K562 (cell line): ENCODE measurements at regions of chr11 and their contacts with region 1.

Region 1: GRCh38 chr11:68051191-68052144 is 12.6 kb downstream of the TCIRG1 start:
- DNase-seq: no peak
- ATAC-seq: no peak
- H3K4me3 ChIP-seq: no peak overlapping the region
- H3K27ac ChIP-seq: no peak overlapping the region
- H3K4me1 ChIP-seq: peaks cover 0 to 26% of the 10 kb centered on the region in 2 experiments; a peak in 1 of 5 replicates
- H3K27me3 ChIP-seq: no peaks in the 10 kb centered on the region
- CTCF ChIP-seq: no peak
- EP300 ChIP-seq: no peak
- POLR2A ChIP-seq: peak; percentile 32; the same call in 1 of the 2 replicates
- RAD21 ChIP-seq: no peak

Region 2: GRCh38 chr11:68038718-68039525 is 12.5 kb before region 1 on chr11 and contains the start of gene TCIRG1:
- CTCF ChIA-PET with region 1: no interaction called
- POLR2A ChIA-PET with region 1: interaction called, 55 read pairs
- in situ Hi-C with region 1: no loop called
- intact Hi-C with region 1: no loop called
- DNase-seq: peak; percentile 90 to 94 (median 92)
- ATAC-seq: peak; percentile 80
- H3K4me3 ChIP-seq: peak within 1 kb of the TSS; percentile 92
- H3K27ac ChIP-seq: peak within 1 kb of the TSS; percentile 83
- H3K4me1 ChIP-seq: peaks cover 44 to 81% of the 10 kb centered on the region in 2 experiments
- H3K27me3 ChIP-seq: no peaks in the 10 kb centered on the region
- CTCF ChIP-seq: no peak
- EP300 ChIP-seq: no peak
- POLR2A ChIP-seq: peak; percentile 83
- RAD21 ChIP-seq: no peak
- polyA plus RNA-seq, gene TCIRG1: 0.49 to 1.9 TPM

Region 3: DNA sequence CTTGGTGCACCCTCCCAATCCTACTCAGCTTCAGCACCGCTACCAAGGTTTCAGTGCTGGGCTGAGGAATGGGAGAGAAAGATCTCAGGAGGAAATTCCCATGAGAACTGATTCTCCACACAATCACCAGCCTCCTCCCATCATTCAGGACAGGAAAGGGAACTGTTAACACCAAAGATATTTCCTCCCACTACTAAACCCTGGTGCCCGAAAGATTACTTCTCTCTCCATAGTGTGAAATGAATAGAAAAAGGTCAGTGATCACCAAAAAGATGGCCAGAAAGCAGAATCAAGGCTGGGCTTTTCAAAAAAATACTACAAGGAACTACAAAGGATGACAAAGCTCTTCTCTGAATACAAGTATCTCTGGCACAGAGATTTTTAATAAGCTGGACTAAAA is 13.5 kb after region 1 on chr11:
- CTCF ChIA-PET with region 1: no interaction called
- POLR2A ChIA-PET with region 1: interaction called, 16 read pairs
- in situ Hi-C with region 1: no loop called
- intact Hi-C with region 1: no loop called
- DNase-seq: no peak
- ATAC-seq: no peak
- H3K4me3 ChIP-seq: no peak overlapping the region
- H3K27ac ChIP-seq: no peak overlapping the region
- H3K4me1 ChIP-seq: no peaks in the 10 kb centered on the region
- H3K27me3 ChIP-seq: no peaks in the 10 kb centered on the region
- CTCF ChIP-seq: no peak
- EP300 ChIP-seq: no peak
- POLR2A ChIP-seq: no peak
- RAD21 ChIP-seq: no peak

Region 4: DNA sequence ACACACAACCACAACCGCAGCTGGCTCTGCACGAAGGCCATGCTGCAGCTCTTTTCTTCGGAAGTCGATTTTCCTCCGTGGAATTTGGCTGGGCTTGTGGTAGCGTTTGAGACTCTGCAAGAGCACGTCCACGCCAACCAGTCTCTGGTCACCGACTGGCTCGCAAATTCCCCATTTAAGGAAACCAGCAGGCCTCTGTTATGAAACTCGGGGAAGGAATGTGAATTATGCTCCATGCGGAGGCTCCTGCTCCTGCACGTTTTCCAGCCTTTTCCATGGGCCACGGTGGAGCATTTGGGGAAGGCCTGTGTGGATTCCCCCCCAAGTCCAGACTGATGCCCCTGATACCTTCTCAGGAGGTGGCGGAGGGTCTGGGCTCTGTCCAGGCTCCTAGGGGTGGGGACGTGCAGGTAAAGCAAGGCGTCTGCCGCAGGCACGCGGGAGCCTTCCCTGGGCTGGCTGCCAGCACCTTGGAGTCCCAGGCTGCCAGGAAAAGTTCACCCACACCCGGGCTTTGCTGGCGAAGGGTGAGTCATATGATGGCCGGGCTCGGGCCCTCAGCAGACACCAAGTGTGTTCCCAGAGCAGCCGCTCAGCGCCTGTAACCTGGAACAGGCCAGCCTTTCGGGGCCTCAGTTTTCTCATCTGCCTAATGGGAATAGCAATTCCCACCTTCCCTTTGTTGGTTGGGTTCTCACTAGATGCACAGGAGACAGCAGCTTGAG is 302.8 kb after region 1 on chr11:
- CTCF ChIA-PET with region 1: no interaction called
- POLR2A ChIA-PET with region 1: no interaction called
- in situ Hi-C with region 1: no loop called
- intact Hi-C with region 1: no loop called
- DNase-seq: no peak
- ATAC-seq: no peak
- H3K4me3 ChIP-seq: no peak overlapping the region
- H3K27ac ChIP-seq: no peak overlapping the region
- H3K4me1 ChIP-seq: peaks cover 0 to 20% of the 10 kb centered on the region in 2 experiments; a peak in 1 of 5 replicates
- H3K27me3 ChIP-seq: no peaks in the 10 kb centered on the region
- CTCF ChIP-seq: no peak
- EP300 ChIP-seq: no peak
- POLR2A ChIP-seq: no peak
- RAD21 ChIP-seq: no peak